CD4-positive, alpha-beta memory T cell (primary cell): ENCODE measurements at regions of chr9 and their contacts with region 1.

Region 1: DNA sequence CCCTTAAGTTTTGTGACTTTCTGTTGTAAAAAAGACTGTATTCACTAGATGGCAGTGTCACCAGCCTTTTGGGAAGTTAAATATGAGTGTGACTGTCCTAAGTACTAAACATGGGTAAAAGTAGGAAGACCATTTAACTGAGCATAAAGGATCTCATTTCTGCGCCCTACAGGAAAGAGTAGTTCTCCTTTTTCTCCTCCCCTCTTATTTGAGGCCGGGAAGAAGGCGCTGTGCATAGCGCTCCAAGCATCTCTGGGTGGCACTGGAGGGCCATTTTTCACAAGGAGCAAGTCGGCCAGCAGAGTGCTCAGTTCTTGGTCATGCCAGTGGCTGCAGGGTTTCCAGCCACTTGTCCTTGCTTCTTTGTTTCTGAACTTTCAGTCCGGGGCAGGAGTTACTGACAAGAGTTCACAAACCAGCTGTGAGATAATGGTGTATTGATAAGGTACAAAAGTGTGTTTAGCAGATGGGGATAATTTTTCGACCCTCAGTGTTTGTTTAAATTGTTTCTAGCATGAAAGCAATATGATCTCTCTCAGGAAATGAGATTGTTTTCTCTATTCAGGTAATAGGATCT is 227.6 kb upstream of the DMRT1 start:
- DNase-seq: peak in 4 of 5 donors; percentile 5 to 15 (median 8)
- H3K4me3 ChIP-seq: no peak overlapping the region
- H3K4me3 Mint-ChIP-seq: no peak overlapping the region
- H3K27ac ChIP-seq: no peak overlapping the region
- H3K27ac Mint-ChIP-seq: peak overlapping the region in 1 of 7 donors; percentile 37
- H3K4me1 ChIP-seq: no peaks in the 10 kb centered on the region
- H3K4me1 Mint-ChIP-seq: peaks cover 0 to 5% (median 3%) of the 10 kb centered on the region in 4 donors
- H3K27me3 ChIP-seq: no peaks in the 10 kb centered on the region
- H3K27me3 Mint-ChIP-seq: peaks cover 2% of the 10 kb centered on the region in 2 donors

Region 2: GRCh38 chr9:763692-764524 is 150.0 kb after region 1 on chr9:
- CTCF ChIA-PET with region 1: interaction called, 6 read pairs
- POLR2A ChIA-PET with region 1: no interaction called
- intact Hi-C with region 1: loop called (anchors 1 kb)
- DNase-seq: peak in 4 of 5 donors; percentile 7 to 28 (median 11)
- H3K4me3 ChIP-seq: no peak overlapping the region
- H3K4me3 Mint-ChIP-seq: no peak overlapping the region
- H3K27ac ChIP-seq: no peak overlapping the region
- H3K27ac Mint-ChIP-seq: peak overlapping the region in 1 of 7 donors; percentile 54
- H3K4me1 ChIP-seq: no peaks in the 10 kb centered on the region
- H3K4me1 Mint-ChIP-seq: peaks cover 0 to 6% (median 3%) of the 10 kb centered on the region in 4 donors
- H3K27me3 ChIP-seq: no peaks in the 10 kb centered on the region
- H3K27me3 Mint-ChIP-seq: peaks cover 15 to 18% of the 10 kb centered on the region in 2 donors